ENCODE measurements at regions of chrX and their contacts with region 1.

Region 1: DNA sequence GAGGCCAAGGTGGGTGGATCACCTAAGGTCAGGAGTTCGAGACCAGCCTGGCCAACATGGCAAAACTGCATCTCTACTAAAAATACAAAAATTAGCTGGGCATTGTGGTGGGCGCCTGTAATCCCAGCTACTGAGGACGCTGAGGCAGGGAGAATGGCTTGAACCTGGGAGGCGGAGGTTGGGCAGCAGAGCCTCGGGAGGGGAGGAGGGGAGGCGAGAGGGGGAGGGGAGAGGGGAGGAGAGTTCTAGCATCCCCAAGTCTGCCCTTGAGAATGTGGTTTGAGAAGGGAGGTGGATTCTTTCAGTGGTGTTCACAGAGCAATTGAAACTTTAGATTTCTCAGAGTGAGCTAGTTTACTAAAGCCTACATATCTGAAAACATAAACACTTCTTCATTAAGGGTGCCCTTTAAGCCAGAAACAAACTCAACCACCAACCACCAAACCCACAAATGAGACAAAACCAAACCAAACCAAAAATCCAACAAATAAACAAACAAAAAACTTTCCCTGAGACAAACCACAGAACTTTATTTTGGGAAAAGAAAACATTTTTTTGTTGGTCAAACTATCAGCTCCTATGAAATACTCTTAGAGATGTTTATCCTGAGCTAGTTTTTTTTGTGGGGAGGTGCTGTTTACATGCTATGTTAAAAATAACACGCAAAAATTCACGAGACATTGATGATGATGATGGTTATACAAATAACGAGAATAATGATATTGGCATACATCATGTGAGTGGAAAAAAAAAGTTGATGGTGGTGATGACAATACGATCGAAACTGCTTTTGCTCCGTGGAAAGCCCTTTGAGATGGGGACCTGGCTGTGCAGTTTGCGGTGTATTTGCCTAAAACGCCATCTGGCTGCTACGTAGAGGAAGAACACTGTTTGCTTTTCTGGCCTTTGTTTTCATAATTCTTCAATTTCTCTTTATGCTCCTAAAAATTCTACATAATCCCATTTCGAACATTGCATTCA is 98.2 kb upstream of the PRKX start:
- DNase-seq: peak; percentile 62
- H3K4me3 ChIP-seq: no peak overlapping the region
- H3K27ac ChIP-seq: no peak overlapping the region
- H3K4me1 ChIP-seq: no peaks in the 10 kb centered on the region
- H3K27me3 ChIP-seq: peaks cover 21% of the 10 kb centered on the region
- CTCF ChIP-seq: peak; percentile 67

Region 2: DNA sequence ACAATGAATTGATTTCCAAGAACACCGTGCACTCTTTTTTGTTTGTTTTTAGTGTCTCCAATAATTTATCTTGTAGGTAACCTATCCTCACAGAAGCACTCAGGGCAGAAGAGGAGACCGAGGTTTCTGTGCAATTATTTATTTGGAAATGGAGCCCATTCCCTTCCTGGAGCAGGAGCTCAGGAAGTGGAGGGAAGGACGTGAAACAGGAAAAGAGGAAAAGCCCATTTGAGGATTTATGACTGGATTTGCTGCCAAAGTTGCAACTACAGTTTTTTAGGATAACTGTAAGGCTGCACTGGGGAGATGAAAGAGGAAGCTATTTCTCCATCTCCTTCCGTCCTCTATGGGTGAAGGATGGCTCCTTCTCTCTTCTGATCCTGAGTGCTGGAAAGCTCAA is 433.5 kb before region 1 on chrX:
- CTCF ChIA-PET with region 1: no interaction called
- POLR2A ChIA-PET with region 1: no interaction called
- intact Hi-C with region 1: no loop called
- DNase-seq: no peak
- H3K4me3 ChIP-seq: no peak overlapping the region
- H3K27ac ChIP-seq: no peak overlapping the region
- H3K4me1 ChIP-seq: no peaks in the 10 kb centered on the region
- H3K27me3 ChIP-seq: no peaks in the 10 kb centered on the region
- CTCF ChIP-seq: no peak

Region 3: GRCh38 chrX:3651276-3651675 is 160.3 kb before region 1 on chrX:
- CTCF ChIA-PET with region 1: interaction called, 3 read pairs
- POLR2A ChIA-PET with region 1: no interaction called
- intact Hi-C with region 1: loop called (anchors 2 kb)
- DNase-seq: peak; percentile 43
- H3K4me3 ChIP-seq: no peak overlapping the region
- H3K27ac ChIP-seq: no peak overlapping the region
- H3K4me1 ChIP-seq: no peaks in the 10 kb centered on the region
- H3K27me3 ChIP-seq: no peaks in the 10 kb centered on the region
- CTCF ChIP-seq: peak; percentile 74

Measured in A673 (cell line).